ENCODE measurements at regions of chr3 and their contacts with region 1.

Region 1: DNA sequence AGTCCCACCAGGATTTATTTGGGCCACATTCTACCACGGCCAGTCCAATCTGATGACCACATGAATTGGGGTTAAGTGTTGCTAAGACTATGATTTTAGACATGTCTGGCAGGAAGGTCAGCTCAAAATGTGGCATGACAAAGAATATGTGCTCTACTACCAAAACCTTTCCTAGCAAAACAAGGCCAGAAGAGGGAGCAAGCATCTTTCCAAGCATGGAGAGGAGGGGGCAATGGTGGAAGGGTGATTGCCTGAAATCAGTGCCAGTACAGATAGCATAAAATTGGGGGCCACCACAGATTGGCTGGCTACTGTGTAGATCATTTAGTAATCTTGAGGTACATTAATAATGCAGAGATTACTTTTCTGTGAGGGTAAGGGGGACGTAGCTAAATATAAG is 43.2 kb downstream of the TMEM39A start:
- DNase-seq: no peak
- ATAC-seq: no peak
- H3K4me3 ChIP-seq: no peak overlapping the region
- H3K27ac ChIP-seq: peak overlapping the region in 1 of 12 donors; percentile 85
- H3K4me1 ChIP-seq: peaks cover 0 to 31% (median 9%) of the 10 kb centered on the region in 12 donors
- H3K27me3 ChIP-seq: no peaks in the 10 kb centered on the region
- CTCF ChIP-seq: no peak
- POLR2A ChIP-seq: no peak

Region 2: GRCh38 chr3:119359476-119360326 is 60.5 kb before region 1 on chr3:
- intact Hi-C with region 1: loop called in 1 of 10 experiments (anchors 5 kb)
- DNase-seq: no peak
- ATAC-seq: peak in 3 of 4 donors; percentile 30 to 50 (median 31)
- H3K4me3 ChIP-seq: no peak overlapping the region
- H3K27ac ChIP-seq: peak overlapping the region in 2 of 12 donors; percentile 2 to 40
- H3K4me1 ChIP-seq: peaks cover 3 to 47% (median 30%) of the 10 kb centered on the region in 12 donors
- H3K27me3 ChIP-seq: no peaks in the 10 kb centered on the region
- CTCF ChIP-seq: no peak
- POLR2A ChIP-seq: no peak

Region 3: DNA sequence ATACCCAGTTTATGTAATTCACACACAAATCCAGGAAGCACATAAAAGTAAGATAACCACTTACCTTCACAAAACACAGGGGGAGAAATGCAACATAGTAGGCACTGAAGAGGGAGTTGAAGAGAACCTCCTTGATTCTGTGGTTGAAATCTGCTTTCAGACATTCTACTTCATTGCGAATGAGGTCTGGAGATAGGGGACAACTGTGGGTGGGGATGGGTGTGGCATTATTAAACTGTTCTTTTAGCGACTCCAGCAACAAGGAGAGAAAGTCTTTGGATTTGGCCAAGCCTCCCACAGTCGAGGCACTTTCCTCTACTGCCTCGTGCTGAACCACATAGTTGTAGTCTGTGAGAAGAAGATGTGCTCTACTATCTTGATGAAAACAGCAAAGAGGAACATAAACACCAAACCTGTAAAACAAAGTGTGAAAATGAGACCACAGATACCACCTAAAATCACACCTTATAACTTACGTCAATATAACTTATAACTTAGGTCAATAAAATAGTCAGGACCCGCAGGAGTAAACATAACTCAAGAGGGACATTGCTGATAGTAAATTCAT is 17.6 kb after region 1 on chr3:
- intact Hi-C with region 1: no loop called
- DNase-seq: no peak
- ATAC-seq: no peak
- H3K4me3 ChIP-seq: no peak overlapping the region
- H3K27ac ChIP-seq: no peak overlapping the region
- H3K4me1 ChIP-seq: peaks cover 0 to 12% (median 0%) of the 10 kb centered on the region in 12 donors
- H3K27me3 ChIP-seq: no peaks in the 10 kb centered on the region
- CTCF ChIP-seq: no peak
- POLR2A ChIP-seq: no peak

Region 4: DNA sequence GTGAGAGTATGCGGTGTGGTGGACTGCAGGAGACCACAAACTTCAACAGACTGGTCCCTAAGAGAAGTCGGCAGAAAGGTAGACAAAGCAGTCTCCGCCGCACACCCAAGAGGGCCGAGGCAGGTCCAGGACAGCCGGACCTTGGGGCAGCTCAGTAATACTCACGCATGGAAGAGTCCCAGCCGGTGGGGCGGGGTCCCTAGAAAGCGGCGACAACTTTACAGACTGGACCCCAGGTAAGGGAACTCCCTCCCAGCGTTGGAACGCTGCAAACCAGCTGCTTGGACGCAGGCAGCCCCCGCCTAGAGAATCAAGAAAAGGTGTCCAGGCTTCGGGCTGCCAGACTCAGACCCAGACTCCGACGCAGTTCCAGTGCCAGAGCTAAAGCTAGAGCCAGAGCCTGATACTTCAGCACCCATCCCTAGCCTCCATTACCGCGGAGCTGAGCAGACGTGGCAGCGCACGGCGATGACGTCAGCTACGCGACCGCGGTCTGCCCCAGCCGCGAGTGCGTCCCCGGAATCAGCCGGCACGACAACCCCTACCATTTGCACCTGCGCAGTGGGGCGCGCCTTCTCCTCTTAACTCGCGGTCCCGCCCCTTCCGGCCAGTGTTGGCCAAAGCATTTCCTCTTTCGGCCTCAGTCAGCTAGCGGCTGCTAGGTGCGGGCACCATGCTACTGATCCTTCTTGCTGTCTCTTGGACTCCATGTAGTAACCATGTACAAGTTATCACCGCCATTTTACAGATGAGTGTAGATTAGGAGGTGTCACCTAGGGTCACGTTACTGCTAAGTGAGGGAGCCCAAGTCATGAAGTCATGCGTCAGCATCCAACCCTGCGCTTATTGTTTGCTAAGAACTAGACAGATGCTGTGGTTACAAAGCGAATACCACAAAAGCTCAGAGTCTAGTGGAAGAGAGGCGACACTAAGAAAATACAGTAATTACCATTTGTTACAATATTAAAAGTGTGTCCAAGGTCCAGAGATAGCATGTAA is 43.3 kb after region 1 on chr3 and contains the start of gene TMEM39A:
- intact Hi-C with region 1: loop called in 1 of 10 experiments (anchors 5 kb)
- DNase-seq: peak; percentile 100
- ATAC-seq: peak; percentile 96 to 99 (median 97)
- H3K4me3 ChIP-seq: peak within 1 kb of the TSS; percentile 62 to 100 (median 88)
- H3K27ac ChIP-seq: peak within 1 kb of the TSS; percentile 76 to 95 (median 84)
- H3K4me1 ChIP-seq: peaks cover 0 to 56% (median 19%) of the 10 kb centered on the region in 12 donors
- H3K27me3 ChIP-seq: no peaks in the 10 kb centered on the region
- CTCF ChIP-seq: peak in 4 of 12 donors; percentile 14 to 37 (median 25)
- POLR2A ChIP-seq: peak; percentile 43 to 94
- total RNA-seq, gene TMEM39A: 8.7 to 21.0 (median 15.6) TPM